ENCODE measurements at regions of chr17 and their contacts with region 1.

Region 1: DNA sequence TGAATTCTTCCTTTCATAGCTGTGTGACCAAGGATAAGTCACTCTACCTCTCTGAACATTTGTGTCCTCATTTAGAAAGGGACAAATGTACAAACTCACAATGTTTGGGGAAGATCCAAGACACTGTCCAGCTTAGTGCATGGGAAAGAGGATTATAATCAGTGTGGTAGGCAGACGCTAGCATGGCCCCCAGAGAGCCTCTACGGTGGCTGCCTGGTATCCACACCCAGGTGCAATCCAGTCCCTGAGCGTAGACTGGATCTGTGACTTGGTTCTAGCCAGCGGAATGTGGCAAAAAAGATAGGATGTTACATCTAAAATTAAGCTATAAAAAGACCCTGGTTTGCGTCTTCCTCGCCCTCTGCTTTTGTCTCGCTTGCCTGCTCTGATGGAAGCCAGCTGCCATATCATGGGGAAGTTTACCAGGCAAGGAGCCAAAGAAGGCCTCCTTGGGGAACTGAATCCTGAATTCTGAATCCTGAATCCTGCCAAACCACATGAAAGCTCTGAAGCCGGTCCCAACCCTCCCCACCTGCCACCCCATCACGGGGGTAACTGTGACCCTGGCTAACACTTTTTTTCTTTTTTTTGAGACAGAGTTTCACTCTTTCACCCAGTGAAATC is 51.7 kb downstream of the PLXDC1 start:
- DNase-seq: no peak
- H3K4me3 ChIP-seq: no peak overlapping the region
- H3K27ac ChIP-seq: no peak overlapping the region
- H3K4me1 ChIP-seq: no peaks in the 10 kb centered on the region
- H3K27me3 ChIP-seq: peaks cover 21% of the 10 kb centered on the region
- CTCF ChIP-seq: no peak

Region 2: DNA sequence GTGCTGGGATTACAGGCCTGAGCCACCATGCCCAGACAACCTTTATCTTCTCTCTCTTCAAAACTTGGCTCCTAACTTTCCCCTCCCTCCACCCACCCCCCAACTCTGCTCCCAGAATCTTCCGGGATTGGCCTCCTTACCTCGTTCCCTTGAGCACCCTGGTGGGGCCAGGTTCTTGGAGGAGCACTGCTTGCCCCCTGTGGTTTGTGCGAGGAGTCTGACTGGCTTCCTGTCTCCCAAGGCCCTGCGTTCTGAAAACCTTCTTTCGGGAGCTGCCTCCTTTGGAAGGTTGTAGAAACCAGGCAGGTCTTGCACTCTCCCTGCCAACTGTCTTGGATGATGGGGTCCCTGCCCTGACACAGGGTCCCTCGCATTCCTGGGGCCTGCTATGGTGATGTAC is 31.8 kb after region 1 on chr17:
- CTCF ChIA-PET with region 1: no interaction called
- POLR2A ChIA-PET with region 1: no interaction called
- intact Hi-C with region 1: loop called (anchors 2 kb)
- DNase-seq: no peak
- H3K4me3 ChIP-seq: no peak overlapping the region
- H3K27ac ChIP-seq: no peak overlapping the region
- H3K4me1 ChIP-seq: no peaks in the 10 kb centered on the region
- H3K27me3 ChIP-seq: no peaks in the 10 kb centered on the region
- CTCF ChIP-seq: no peak

Measured in PC-9 (cell line).